ENCODE measurements at regions of chr4 and their contacts with region 1.

Region 1: DNA sequence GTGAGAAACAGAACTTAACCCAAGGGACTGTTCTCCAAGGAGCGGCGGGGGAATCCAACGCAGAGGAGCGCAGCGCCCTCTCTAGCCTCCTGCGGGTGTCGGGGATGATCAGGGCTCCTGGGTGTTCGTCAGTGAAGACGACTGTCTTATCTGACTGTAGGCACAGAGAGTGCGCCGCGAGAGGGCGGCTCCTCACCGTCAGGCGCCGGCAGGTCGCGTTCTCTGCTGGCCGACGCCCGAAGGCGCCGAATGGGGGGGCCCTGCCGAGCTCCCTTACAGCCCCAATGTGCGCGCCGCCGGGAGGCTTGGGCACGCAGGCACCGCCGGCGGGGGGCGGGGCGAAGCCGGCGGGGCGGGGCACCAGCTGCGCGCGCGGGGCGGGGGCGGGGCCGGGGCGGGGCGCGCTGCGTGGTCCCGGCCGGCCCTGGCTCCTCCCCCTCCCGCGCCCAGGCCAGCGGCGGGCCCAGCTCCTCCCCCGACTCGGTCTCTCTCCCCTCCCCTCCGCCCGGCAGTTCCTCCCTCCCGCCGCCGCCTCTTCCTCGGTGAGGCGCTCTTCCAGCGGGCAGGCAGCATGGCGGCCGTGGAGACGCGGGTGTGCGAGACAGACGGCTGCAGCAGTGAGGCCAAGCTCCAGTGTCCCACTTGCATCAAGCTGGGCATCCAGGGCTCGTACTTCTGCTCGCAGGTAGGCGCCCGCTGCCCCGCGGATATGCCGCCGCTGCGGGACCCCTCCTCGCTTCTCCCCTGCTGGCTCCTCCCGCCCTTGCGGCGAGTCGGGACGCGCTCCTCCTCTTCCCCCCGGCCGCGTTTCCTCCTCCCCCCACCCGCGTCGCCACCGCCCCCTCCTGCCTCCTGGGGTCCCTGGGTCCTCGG is at the start of gene METAP1:
- DNase-seq: peak; percentile 63
- H3K4me3 ChIP-seq: peak within 1 kb of the TSS; percentile 98
- CTCF ChIP-seq: peak; percentile 74

Region 2: DNA sequence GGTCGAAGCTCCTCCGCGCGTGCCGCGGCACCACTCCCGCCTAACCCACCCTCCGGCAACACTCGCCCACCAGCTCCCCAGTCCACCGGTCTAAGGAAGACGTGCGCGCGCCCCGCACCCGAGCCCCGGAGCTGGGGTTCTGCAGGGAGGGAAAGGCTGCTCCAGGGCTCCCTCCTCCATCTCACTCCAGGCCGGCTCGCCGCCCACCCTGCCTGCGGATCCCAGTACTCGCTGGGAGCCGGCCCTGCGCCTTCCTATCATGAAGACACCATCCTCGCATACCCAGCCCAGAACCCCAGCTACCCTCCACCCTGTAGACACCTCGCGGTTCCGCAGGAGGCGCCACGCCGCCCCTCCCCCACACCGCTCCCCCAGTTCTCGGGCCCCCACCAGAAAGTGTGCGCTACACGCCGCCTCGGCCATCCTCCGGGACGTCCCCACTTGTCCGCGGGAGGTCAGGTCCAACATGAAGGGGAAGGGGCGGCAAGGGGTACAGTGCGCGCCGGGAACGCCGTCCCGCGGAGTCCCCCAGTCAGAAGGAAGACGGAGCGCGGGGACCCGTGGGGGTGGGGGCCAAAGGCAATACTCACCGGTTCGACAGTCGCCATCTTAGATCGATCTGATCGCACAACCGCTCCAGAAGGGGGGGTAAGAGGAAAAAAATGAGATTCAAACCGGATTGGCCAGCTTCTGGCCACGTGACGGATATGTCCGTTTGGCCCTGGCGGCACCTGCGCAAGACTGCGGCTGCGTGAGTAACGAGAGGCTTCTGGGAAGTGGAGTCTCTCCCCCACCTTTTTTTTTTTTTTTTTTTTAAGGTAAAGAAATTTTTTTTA is 66.7 kb before region 1 on chr4 and contains the start of gene EIF4E:
- CTCF ChIA-PET with region 1: interaction called, 18 read pairs
- POLR2A ChIA-PET with region 1: interaction called, 8 read pairs
- DNase-seq: peak; percentile 96
- H3K4me3 ChIP-seq: peak within 1 kb of the TSS; percentile 94
- CTCF ChIP-seq: peak; percentile 18

Region 3: DNA sequence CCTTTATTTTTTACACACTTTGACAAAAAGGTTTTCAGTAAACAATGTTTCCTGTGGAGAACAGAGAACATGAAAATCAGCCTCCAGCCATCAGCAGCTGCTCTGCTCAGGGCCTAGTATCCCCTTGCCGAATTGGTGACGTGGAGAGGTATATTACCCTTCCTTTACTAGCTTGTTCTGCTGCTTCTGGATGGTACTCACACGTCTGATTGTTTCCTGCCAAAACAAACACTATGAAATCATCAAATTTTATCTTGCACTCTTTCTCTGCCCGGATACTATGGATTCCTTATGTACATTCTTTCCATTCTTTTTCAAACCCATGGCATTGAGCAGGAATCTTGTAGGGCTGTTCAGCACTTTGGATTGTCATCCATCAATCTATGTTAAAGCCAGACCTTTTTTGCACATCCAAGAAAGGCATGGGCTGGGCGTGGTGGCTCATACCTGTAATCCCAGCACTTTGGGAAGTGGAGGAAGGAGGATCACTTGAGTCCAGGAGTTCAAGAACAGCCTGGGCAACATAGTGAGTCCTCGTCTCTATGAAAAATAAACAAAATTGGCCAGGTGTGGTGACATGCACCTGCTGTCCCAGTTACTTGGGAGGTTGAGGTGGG is 18.6 kb before region 1 on chr4:
- CTCF ChIA-PET with region 1: interaction called, 13 read pairs
- POLR2A ChIA-PET with region 1: no interaction called
- DNase-seq: peak; percentile 64
- H3K4me3 ChIP-seq: no peak overlapping the region
- CTCF ChIP-seq: no peak

Region 4: GRCh38 chr4:99008051-99008450 is 12.6 kb after region 1 on chr4:
- CTCF ChIA-PET with region 1: interaction called, 31 read pairs
- POLR2A ChIA-PET with region 1: interaction called, 5 read pairs
- DNase-seq: no peak
- H3K4me3 ChIP-seq: no peak overlapping the region
- CTCF ChIP-seq: no peak

Region 5: DNA sequence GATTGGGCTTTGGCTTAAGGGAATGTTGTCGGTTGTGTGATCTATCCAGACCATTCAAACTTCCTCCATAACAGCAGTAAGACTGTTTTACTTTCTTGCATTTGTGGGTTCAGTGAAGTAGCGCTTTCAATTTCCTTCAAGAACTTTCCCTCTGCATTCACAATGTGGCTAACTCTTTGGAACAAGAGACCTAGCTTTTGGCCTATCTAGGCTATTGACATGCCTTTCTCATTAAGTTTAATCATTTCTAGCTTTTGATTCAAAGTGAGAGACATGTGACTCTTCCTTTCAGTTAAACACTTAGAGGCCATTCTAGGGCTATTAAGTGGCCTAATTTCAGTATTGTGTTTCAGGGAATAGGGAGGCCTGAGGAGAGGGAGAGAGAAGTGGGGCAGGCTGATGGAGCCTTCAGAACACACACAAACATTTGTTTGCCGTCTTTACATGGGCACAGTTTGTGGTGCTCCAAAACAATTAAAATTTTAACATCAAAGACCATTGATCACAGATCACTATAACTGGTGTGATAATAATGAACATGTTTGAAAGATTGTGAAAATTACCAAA is 59.1 kb after region 1 on chr4:
- CTCF ChIA-PET with region 1: interaction called, 43 read pairs
- POLR2A ChIA-PET with region 1: interaction called, 3 read pairs
- DNase-seq: no peak
- H3K4me3 ChIP-seq: no peak overlapping the region
- CTCF ChIP-seq: no peak

Region 6: DNA sequence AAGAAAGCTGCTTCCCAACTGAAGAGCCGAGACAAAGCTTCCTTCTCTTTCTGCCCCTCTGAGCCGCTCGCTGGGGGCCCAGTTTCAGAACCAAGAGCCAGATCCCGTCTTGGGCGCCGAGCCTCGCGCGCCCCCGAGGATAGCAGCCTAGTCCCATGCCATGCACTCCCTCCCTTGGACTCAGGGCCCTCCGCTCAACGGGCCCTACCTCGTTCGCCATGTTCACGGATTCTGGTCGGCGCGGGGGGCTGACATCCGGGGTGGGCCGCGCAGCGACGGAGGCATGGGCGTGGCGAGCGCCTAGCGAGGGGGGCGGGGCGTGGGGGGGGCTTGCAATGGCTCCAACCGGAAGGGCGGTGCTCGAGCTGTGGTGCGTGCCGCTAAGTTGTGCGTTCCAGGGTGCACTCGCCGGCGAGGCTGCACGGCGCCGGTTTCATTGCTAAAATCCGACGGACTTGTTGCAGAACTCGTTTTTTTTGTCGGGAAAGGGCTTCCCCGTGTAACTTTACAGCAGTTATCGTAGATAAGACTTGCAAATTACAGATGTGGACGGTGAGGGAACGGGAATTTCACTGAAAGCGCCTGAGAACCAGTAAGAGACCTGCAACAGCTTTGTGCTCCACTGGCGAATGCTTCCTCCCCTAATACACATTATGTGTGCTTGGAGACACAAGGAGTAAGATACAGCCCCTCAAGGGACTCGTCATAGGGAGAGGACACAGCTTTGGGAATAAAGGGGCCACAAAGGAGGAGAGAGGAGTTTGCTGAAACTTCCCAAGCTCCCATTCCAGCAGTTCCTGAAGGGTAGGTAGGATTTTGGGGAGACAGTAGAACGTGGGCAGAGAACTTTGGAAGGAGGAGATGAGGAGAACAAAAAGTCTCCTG is 93.3 kb after region 1 on chr4 and contains the start of gene ADH5:
- CTCF ChIA-PET with region 1: interaction called, 3 read pairs
- POLR2A ChIA-PET with region 1: interaction called, 11 read pairs
- DNase-seq: no peak
- H3K4me3 ChIP-seq: peak within 1 kb of the TSS; percentile 66
- CTCF ChIP-seq: no peak

Region 7: DNA sequence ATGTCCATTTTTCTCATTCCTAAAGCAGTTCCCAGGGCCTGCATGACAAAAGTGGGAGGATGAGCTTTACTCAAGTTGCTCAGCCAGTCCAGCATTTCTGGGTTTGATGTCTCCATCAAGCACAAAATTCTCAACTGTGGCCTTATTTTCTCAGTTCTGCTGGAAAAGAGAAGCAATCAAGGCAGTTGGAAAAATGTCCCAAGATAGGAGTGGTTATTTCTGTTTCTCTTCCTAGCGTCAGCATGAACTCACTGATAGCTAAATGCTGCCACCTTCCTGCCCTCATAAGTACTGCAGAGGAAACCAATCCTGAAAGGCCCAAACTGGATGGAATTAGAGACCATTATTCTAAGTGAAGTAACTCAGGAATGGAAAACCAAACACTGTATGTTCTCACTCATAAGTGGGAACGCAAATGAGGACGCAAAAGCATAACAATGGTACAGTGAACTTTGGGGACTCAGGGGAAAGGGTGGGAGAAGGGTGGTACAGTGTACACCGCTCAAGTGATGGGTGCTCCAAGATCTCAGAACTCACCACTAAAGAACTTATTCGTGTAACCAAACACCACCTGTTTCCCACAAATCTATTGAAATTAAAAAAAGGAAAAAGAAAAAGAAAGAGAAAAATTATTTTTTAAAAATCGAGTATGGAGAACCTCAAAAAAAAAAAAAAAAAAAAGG is 410.2 kb after region 1 on chr4:
- CTCF ChIA-PET with region 1: interaction called, 12 read pairs
- POLR2A ChIA-PET with region 1: no interaction called
- DNase-seq: no peak
- H3K4me3 ChIP-seq: no peak overlapping the region
- CTCF ChIP-seq: peak; percentile 78

Measured in AG04449 (cell line).